ENCODE measurements at regions of chr9 and their contacts with region 1.

Region 1: DNA sequence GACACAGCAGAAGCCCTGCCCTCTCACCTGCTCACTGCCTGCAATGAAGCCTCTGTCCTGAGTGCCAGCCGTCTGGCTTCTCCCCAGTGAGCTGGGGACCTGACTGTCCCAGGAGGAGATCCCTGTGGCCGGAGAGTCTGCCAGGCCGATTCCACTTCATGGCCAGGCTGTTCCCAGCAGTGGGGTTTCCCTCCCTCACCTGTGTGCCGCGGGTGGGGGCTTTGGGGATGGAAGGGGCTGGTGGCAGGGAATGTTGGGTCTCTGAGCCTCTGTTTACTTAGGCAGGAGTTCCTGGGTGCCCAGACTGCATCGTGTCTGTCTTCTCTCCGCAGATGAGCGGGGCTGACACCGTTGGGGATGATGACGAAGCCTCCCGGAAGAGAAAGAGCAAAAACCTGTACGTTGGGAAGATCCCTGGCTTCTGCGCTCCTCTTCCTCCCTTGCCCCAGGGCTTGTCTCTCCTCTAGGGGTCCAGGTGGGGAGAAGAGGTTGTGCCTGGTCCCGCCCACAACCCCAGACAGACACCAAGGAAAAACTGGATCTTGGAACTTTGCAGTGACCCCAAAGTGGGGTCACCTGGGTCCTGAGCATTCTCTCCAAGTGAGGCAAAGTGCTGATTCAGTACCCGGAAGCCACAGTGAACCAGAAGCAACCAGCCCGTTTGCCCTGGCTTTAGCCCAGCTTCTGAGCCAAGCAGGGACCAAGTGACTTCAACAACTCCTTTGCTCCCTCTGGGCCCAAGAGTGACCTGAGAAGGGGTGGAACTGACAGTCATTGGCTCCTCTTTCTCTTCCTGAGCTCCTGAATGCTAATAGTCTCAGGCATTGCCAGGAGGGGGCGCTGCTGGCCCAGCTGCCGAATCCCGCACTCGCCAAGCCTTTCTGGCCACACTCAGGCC is 127.7 kb downstream of the RGS3 start:
- DNase-seq: peak; percentile 60 to 94
- H3K4me3 ChIP-seq: no peak overlapping the region
- H3K27ac ChIP-seq: no peak overlapping the region
- H3K4me1 ChIP-seq: peaks cover 10 to 23% (median 15%) of the 10 kb centered on the region in 4 experiments
- H3K27me3 ChIP-seq: no peaks in the 10 kb centered on the region
- CTCF ChIP-seq: peak in 2 of 3 experiments; percentile 96 to 97; a peak in 3 of 4 replicates
- EP300 ChIP-seq: peak; percentile 12 to 47; a peak in 1 of 3 replicates
- POLR2A ChIP-seq: no peak
- RAD21 ChIP-seq: peak; percentile 99 to 100

Region 2: GRCh38 chr9:113355040-113355596 is 236.1 kb before region 1 on chr9:
- CTCF ChIA-PET with region 1: interaction called, 10 read pairs
- POLR2A ChIA-PET with region 1: no interaction called
- DNase-seq: no peak
- H3K4me3 ChIP-seq: no peak overlapping the region
- H3K27ac ChIP-seq: no peak overlapping the region
- H3K4me1 ChIP-seq: peaks cover 3 to 11% (median 6%) of the 10 kb centered on the region in 4 experiments
- H3K27me3 ChIP-seq: peaks cover 0 to 10% (median under 1%) of the 10 kb centered on the region in 4 experiments; a peak in 5 of 7 replicates
- CTCF ChIP-seq: peak in 2 of 3 experiments; percentile 35 to 38; a peak in 3 of 4 replicates
- EP300 ChIP-seq: no peak
- POLR2A ChIP-seq: no peak
- RAD21 ChIP-seq: peak; percentile 36 to 61

Region 3: GRCh38 chr9:113380869-113381378 is 210.3 kb before region 1 on chr9:
- CTCF ChIA-PET with region 1: no interaction called
- POLR2A ChIA-PET with region 1: no interaction called
- DNase-seq: no peak
- H3K4me3 ChIP-seq: no peak overlapping the region
- H3K27ac ChIP-seq: no peak overlapping the region
- H3K4me1 ChIP-seq: no peaks in the 10 kb centered on the region; a peak in 1 of 7 replicates
- H3K27me3 ChIP-seq: no peaks in the 10 kb centered on the region; a peak in 1 of 7 replicates
- CTCF ChIP-seq: no peak
- EP300 ChIP-seq: no peak
- POLR2A ChIP-seq: no peak
- RAD21 ChIP-seq: no peak

Region 4: GRCh38 chr9:113446323-113446740 is 144.9 kb before region 1 on chr9:
- CTCF ChIA-PET with region 1: interaction called, 191 read pairs
- POLR2A ChIA-PET with region 1: interaction called, 4 read pairs
- DNase-seq: no peak
- H3K4me3 ChIP-seq: no peak overlapping the region
- H3K27ac ChIP-seq: no peak overlapping the region
- H3K4me1 ChIP-seq: no peaks in the 10 kb centered on the region
- H3K27me3 ChIP-seq: no peaks in the 10 kb centered on the region
- CTCF ChIP-seq: peak in 2 of 3 experiments; percentile 47; a peak in 2 of 4 replicates
- EP300 ChIP-seq: no peak
- POLR2A ChIP-seq: no peak
- RAD21 ChIP-seq: peak; percentile 86 to 88

Region 5: GRCh38 chr9:113564498-113565237 is 26.6 kb before region 1 on chr9:
- CTCF ChIA-PET with region 1: interaction called, 13 read pairs
- POLR2A ChIA-PET with region 1: interaction called, 5 read pairs
- DNase-seq: peak in 1 of 2 experiments; percentile 68
- H3K4me3 ChIP-seq: peak overlapping the region; percentile 37 to 61 (median 48)
- H3K27ac ChIP-seq: no peak overlapping the region
- H3K4me1 ChIP-seq: peaks cover 4 to 23% (median 13%) of the 10 kb centered on the region in 4 experiments
- H3K27me3 ChIP-seq: peaks cover 0 to 5% (median 0%) of the 10 kb centered on the region in 4 experiments; a peak in 1 of 7 replicates
- CTCF ChIP-seq: no peak
- EP300 ChIP-seq: no peak
- POLR2A ChIP-seq: no peak
- RAD21 ChIP-seq: no peak

Region 6: GRCh38 chr9:113609562-113610318 is 18.5 kb after region 1 on chr9:
- CTCF ChIA-PET with region 1: interaction called, 130 read pairs
- POLR2A ChIA-PET with region 1: interaction called, 20 read pairs
- DNase-seq: no peak
- H3K4me3 ChIP-seq: peak overlapping the region in 1 of 4 experiments; percentile 27; a peak in 1 of 8 replicates
- H3K27ac ChIP-seq: peak overlapping the region; percentile 54
- H3K4me1 ChIP-seq: peaks cover 10 to 17% (median 12%) of the 10 kb centered on the region in 4 experiments
- H3K27me3 ChIP-seq: no peaks in the 10 kb centered on the region
- CTCF ChIP-seq: no peak
- EP300 ChIP-seq: peak in 1 of 2 experiments; percentile 37; a peak in 1 of 3 replicates
- POLR2A ChIP-seq: peak in 1 of 2 experiments; percentile 57; a peak in 2 of 3 replicates
- RAD21 ChIP-seq: peak in 1 of 2 experiments; percentile 1; a peak in 1 of 4 replicates

Region 7: DNA sequence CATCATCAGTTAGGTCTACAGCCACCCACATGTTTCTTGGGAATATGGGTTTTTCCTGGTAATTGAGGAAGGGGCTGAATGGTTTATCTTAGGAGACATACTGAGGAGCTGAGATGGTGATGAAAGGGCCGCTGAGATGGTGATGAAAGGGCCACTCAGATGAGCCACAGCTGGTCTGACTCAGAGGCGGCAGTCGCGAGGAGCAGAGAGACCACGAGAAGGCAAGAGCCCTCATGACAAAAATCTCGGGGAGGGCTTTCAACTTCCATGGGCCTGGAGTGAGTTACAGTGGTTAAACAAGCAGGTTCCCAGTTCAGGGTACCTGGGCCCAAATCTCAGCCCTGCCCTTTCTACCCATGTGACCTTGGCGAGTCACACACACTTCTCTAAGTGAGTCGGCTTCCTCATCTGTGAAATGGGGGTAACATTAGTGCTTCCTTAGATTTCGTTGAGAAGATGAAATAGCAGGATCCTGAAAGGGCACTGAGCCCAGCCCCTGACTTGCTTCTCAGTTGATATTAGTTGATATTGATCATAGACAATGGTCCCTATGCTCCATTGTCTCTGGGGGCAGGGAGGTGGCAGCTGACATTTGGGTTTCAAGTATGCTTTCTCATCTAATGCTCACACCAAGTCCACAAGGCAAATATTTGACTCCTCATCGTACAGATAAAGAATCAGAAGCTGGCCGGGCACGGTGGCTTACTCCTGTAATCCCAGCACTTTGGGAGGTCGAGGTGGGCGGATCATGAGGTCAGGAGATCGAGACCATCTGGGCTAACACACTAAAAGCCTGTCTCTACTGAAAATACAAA is 41.7 kb after region 1 on chr9:
- CTCF ChIA-PET with region 1: interaction called, 130 read pairs
- POLR2A ChIA-PET with region 1: interaction called, 12 read pairs
- DNase-seq: no peak
- H3K4me3 ChIP-seq: no peak overlapping the region
- H3K27ac ChIP-seq: no peak overlapping the region
- H3K4me1 ChIP-seq: peaks cover 0 to 6% (median 4%) of the 10 kb centered on the region in 4 experiments; a peak in 3 of 7 replicates
- H3K27me3 ChIP-seq: peaks cover 0 to 1% (median 0%) of the 10 kb centered on the region in 4 experiments; a peak in 2 of 7 replicates
- CTCF ChIP-seq: no peak
- EP300 ChIP-seq: no peak
- POLR2A ChIP-seq: no peak
- RAD21 ChIP-seq: no peak